Dendritic cell treated with granulocyte-macrophage colony-stimulating factor and Interleukin-4, amounts not matched to agents 40 ng/mL and 50 ng/mL, for 4 days (primary cell): ENCODE measurements at regions of chrX and their contacts with region 1.

Region 1: DNA sequence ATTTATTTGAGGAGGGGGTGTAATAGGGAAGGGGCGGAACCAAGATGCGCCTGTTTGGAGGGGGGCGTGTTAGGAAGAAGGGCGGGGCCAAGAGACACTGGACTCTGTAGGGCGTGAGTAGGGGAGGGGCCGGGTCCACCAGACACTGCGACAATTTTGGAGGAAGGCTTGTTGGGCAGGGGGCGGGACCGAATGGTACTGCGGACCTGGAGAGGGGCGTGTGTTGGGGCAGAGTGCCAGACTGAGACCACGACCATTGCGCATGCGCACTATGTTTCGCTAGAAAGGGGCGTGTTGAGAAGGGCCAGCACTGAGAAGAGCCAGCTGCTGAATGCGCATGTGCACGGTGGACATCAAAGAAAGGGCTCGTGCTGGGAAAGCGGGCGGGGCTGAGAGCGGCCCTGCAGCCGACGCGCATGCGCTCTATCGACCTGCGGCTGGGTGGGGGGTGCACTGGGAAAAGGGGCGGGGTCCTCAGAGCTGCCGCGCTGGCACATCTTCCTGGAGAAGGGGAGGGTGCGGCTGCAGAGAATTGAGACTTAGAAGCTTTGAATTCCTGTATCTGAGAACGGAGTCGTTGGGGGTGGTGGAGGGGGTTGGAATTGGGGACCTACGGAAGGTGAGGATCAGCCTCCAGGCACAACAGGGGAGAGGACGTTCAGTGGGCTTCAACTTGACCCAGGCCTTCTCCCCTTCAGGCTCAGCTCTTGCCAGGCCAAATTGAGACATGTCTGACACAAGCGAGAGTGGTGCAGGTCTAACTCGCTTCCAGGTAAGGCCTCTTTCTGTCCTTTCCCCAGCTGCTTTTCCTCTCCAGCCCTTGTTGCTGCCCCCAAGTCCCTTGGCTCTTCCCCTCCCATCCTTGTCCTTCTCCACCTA is 1.3 kb downstream of the MAGED2 start:
- H3K4me3 Mint-ChIP-seq: peak overlapping the region; percentile 83
- H3K27ac Mint-ChIP-seq: peak overlapping the region; percentile 87
- H3K4me1 Mint-ChIP-seq: peaks cover 38% of the 10 kb centered on the region
- H3K27me3 Mint-ChIP-seq: peaks cover 12% of the 10 kb centered on the region

Region 2: GRCh38 chrX:54044126-54044876 is 764.5 kb before region 1 on chrX and contains the start of gene PHF8:
- intact Hi-C with region 1: loop called (anchors 10 kb)
- H3K4me3 Mint-ChIP-seq: peak within 1 kb of the TSS; percentile 90
- H3K27ac Mint-ChIP-seq: peak within 1 kb of the TSS; percentile 95
- H3K4me1 Mint-ChIP-seq: peaks cover 13% of the 10 kb centered on the region
- H3K27me3 Mint-ChIP-seq: no peaks in the 10 kb centered on the region

Region 3: DNA sequence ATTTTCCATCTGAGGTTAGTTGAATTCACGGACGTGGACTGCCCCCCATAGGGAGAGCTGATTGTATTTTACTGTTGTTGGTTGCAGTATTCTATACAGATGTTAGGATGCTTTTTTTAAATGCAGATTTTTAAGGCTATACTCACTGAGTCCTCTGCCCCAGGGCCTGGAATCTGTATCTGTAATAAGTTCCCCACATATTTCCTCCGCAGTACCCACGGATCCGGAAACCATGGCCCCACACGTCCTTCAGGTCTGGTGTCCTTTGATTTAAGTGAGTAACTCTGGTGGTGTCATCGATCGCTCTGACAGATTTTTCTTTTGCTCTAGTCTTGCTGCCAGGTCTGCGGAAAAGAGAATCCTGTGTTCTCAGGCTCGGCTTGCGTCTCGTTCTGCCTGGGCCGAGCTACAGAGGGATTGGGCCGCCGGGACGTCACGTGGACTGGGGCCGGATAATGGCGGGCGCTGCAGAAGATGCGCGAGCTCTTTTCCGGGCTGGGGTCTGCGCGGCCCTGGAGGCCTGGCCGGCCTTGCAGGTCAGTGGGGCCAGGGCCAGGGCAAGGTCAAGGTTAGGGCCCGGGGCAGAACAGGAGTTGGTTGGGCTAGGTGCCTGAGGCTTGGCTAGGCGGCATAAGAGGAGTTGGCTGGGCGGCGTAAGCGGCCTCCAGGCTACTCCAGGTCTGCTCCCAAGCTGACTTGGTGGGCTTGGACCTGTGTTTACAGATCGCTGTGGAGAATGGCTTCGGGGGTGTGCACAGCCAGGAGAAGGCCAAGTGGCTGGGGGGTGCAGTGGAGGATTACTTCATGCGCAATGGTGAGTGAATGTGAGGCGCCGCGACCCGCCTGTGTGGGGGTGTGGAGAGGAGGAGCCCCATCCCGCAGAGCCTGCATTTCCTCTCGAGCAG is 368.6 kb before region 1 on chrX and contains the start of gene TSR2:
- intact Hi-C with region 1: loop called (anchors 10 kb)
- H3K4me3 Mint-ChIP-seq: peak within 1 kb of the TSS; percentile 99
- H3K27ac Mint-ChIP-seq: peak within 1 kb of the TSS; percentile 87
- H3K4me1 Mint-ChIP-seq: peaks cover 18% of the 10 kb centered on the region
- H3K27me3 Mint-ChIP-seq: peaks cover 6% of the 10 kb centered on the region

Region 4: GRCh38 chrX:54529552-54530357 is 279.1 kb before region 1 on chrX and contains the start of gene GNL3L:
- intact Hi-C with region 1: loop called (anchors 5 kb)
- H3K4me3 Mint-ChIP-seq: peak within 1 kb of the TSS; percentile 79
- H3K27ac Mint-ChIP-seq: peak within 1 kb of the TSS; percentile 88
- H3K4me1 Mint-ChIP-seq: peaks cover 26% of the 10 kb centered on the region
- H3K27me3 Mint-ChIP-seq: no peaks in the 10 kb centered on the region

Region 5: DNA sequence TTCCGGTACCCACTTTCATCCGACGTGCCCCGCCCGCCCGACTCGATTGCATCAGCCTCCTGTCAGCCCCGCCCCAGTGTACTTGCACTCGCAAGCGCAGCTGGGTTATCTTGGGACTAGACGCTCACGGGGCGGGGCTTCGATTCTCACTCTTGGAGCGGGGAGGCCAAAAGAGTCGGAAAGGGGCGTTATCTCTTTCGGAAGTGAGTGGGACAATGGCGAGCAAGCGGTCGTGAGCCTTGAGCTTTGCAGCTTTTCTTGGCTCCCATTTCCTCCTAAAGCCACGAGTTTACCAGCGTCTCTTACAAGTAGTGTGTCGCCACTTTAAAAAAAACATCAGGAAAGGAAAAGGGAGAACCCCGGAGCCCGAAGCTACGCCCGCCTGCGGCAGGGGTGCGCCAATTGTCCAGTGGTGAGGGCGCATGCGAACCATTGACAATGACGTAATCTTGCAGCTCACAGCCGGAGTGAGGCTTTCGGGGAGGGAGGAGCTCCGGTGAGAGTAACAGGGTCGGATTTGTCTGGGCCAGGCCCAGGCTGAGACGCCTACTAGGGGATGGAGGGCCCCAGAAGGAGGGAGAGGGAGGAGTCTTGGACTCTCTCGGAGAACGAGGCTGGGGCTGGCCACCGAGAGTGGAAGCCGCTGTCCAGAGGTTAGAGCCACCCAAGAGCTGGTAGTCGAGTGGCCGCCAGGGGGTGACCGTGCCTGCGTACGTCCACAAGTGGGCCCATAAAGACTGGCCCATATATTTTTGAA is 169.3 kb before region 1 on chrX:
- intact Hi-C with region 1: loop called (anchors 1 kb)
- H3K4me3 Mint-ChIP-seq: peak overlapping the region; percentile 86
- H3K27ac Mint-ChIP-seq: peak overlapping the region; percentile 98
- H3K4me1 Mint-ChIP-seq: no peaks in the 10 kb centered on the region
- H3K27me3 Mint-ChIP-seq: no peaks in the 10 kb centered on the region

Region 6: GRCh38 chrX:55011294-55011693 is 202.4 kb after region 1 on chrX:
- intact Hi-C with region 1: loop called (anchors 10 kb)
- H3K4me3 Mint-ChIP-seq: no peak overlapping the region
- H3K27ac Mint-ChIP-seq: no peak overlapping the region
- H3K4me1 Mint-ChIP-seq: peaks cover 28% of the 10 kb centered on the region
- H3K27me3 Mint-ChIP-seq: no peaks in the 10 kb centered on the region